Right cardiac atrium (tissue), 5 donors: ENCODE measurements at regions of chr18 and their contacts with region 1.

Region 1: GRCh38 chr18:32552421-32553030 is 81.8 kb upstream of the GAREM1 start:
- DNase-seq: peak in 2 of 3 donors; percentile 15 to 59
- ATAC-seq: peak; percentile 65 to 69
- H3K4me3 ChIP-seq: no peak overlapping the region
- H3K27ac ChIP-seq: no peak overlapping the region
- H3K4me1 ChIP-seq: no peaks in the 10 kb centered on the region
- H3K27me3 ChIP-seq: no peaks in the 10 kb centered on the region

Region 2: GRCh38 chr18:32158108-32158624 is 394.4 kb before region 1 on chr18:
- intact Hi-C with region 1: loop called (anchors 2 to 5 kb)
- DNase-seq: peak; percentile 77 to 86 (median 80)
- ATAC-seq: peak; percentile 95
- H3K4me3 ChIP-seq: no peak overlapping the region
- H3K27ac ChIP-seq: no peak overlapping the region
- H3K4me1 ChIP-seq: no peaks in the 10 kb centered on the region
- H3K27me3 ChIP-seq: no peaks in the 10 kb centered on the region

Region 3: DNA sequence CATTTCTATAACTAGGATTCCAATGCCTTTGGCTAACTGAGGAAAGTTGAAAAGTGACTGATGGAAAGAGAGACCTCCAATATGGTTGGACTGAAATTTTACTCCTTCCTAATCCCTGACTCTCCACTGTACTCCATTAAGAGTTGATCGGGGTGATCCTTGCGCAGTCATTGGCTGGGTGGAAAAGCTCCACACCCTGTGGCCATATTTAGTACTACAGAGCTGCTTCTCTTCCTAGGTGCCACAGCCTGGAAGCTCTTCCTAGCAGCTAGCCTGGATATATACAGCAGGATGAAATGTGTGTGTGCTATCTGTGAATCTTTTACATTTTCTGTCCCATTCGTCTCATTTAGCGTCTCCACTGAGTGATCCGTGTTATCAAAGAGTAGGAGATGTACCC is 291.5 kb before region 1 on chr18:
- intact Hi-C with region 1: loop called in 1 of 4 experiments (anchors 10 kb)
- DNase-seq: no peak
- ATAC-seq: no peak
- H3K4me3 ChIP-seq: no peak overlapping the region
- H3K27ac ChIP-seq: no peak overlapping the region
- H3K4me1 ChIP-seq: no peaks in the 10 kb centered on the region
- H3K27me3 ChIP-seq: no peaks in the 10 kb centered on the region

Region 4: GRCh38 chr18:32271672-32272208 is 280.8 kb before region 1 on chr18:
- intact Hi-C with region 1: loop called in 3 of 4 experiments (anchors 5 to 10 kb)
- DNase-seq: no peak
- ATAC-seq: peak; percentile 66 to 70
- H3K4me3 ChIP-seq: no peak overlapping the region
- H3K27ac ChIP-seq: no peak overlapping the region
- H3K4me1 ChIP-seq: no peaks in the 10 kb centered on the region
- H3K27me3 ChIP-seq: no peaks in the 10 kb centered on the region